Heart right ventricle (tissue), 16 donors: ENCODE measurements at regions of chr4 and their contacts with region 1.

Region 1: DNA sequence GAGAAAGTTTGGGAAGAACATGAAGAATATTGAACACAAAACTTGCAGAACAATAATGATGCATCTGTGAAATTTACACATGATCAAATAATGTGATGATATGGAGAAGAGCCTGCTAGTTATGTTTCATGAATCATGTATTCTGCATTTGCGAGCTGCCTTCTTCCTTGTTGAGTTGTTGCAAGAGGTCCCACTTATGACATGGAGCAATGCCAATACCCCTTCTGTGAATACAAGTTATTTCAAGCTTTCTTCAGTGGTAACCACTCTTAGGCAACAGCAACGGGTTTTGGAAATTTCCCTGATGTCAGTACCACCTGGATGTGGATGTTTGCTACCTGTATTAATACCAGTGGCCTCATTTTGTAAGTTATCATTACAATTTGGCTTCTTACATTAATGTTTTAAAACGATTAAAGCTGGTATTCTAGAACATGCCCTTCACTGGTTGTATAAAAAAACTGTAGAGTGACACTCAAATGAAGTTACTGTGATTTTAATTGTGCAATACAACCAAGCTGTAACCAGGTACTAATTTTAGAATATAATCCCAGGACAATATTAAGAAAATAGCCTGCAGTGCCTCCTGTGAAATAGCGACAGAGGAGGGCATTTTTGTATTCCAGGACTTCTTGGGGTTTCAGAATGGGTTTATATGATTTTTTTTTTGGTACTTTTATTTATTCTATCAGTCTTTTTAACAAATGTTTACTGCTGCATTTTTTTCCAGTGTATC is 25.3 kb downstream of the IQCM start:
- DNase-seq: no peak
- ATAC-seq: peak in 2 of 8 donors; percentile 29 to 39
- H3K4me3 ChIP-seq: no peak overlapping the region
- H3K27ac ChIP-seq: no peak overlapping the region
- H3K4me1 ChIP-seq: peaks cover 0 to 4% (median 0%) of the 10 kb centered on the region in 9 donors
- H3K27me3 ChIP-seq: no peaks in the 10 kb centered on the region
- CTCF ChIP-seq: peak in 1 of 9 donors; percentile 14

Region 2: DNA sequence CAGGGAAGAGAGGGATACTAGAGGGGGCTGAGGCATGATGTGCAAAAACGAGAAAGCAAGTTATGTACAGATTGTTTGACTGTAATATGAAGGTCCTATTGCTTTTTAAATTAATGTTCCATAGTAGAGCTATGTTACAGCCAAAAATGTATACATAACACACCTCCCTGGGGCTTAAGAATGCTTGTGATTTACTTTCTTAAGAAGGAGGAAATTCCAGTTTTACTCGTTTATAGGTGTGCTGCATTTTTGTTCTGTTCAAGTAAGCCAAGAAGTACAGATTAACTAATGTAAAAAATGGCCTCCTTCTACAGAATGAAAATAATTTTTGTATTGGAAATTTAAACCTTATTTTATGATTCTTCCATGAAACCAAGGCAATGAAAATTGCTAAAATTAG is 733.7 kb before region 1 on chr4:
- intact Hi-C with region 1: loop called in 1 of 10 experiments (anchors 5 kb)
- DNase-seq: no peak
- ATAC-seq: no peak
- H3K4me3 ChIP-seq: no peak overlapping the region
- H3K27ac ChIP-seq: no peak overlapping the region
- H3K4me1 ChIP-seq: no peaks in the 10 kb centered on the region
- H3K27me3 ChIP-seq: no peaks in the 10 kb centered on the region
- CTCF ChIP-seq: no peak

Region 3: DNA sequence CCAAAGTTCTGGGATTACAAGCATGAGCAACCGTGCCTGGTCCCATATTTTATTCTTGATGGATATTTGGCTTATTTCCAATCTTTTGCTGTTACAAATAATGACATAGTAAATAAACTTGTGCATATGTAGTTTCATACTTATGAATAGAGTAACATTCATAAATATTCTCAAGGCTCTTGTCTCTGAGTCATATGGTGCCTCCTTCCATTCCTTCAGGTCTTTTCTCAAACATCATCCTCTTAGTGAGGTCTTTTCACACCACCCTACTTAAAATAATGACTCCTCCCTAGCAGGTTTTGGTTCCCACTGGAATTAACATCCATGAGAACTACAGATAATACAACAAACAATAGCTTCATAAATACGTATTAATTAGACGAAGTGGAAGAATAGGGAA is 391.3 kb before region 1 on chr4:
- intact Hi-C with region 1: no loop called
- DNase-seq: no peak
- ATAC-seq: no peak
- H3K4me3 ChIP-seq: no peak overlapping the region
- H3K27ac ChIP-seq: no peak overlapping the region
- H3K4me1 ChIP-seq: peaks cover 0 to 11% (median 0%) of the 10 kb centered on the region in 9 donors
- H3K27me3 ChIP-seq: no peaks in the 10 kb centered on the region
- CTCF ChIP-seq: no peak

Region 4: GRCh38 chr4:149708513-149709175 is 81.7 kb before region 1 on chr4:
- intact Hi-C with region 1: loop called in 1 of 10 experiments (anchors 10 kb)
- DNase-seq: no peak
- ATAC-seq: peak in 1 of 8 donors; percentile 67
- H3K4me3 ChIP-seq: no peak overlapping the region
- H3K27ac ChIP-seq: no peak overlapping the region
- H3K4me1 ChIP-seq: peaks cover 0 to 23% (median 0%) of the 10 kb centered on the region in 9 donors
- H3K27me3 ChIP-seq: no peaks in the 10 kb centered on the region
- CTCF ChIP-seq: no peak

Region 5: GRCh38 chr4:149884046-149884445 is 93.7 kb after region 1 on chr4:
- intact Hi-C with region 1: loop called in 1 of 10 experiments (anchors 10 kb)
- DNase-seq: peak; percentile 21 to 26
- ATAC-seq: peak in 6 of 8 donors; percentile 49 to 87 (median 80)
- H3K4me3 ChIP-seq: no peak overlapping the region
- H3K27ac ChIP-seq: peak overlapping the region in 1 of 10 donors; percentile 18
- H3K4me1 ChIP-seq: peaks cover 0 to 13% (median 0%) of the 10 kb centered on the region in 9 donors
- H3K27me3 ChIP-seq: no peaks in the 10 kb centered on the region
- CTCF ChIP-seq: no peak

Region 6: DNA sequence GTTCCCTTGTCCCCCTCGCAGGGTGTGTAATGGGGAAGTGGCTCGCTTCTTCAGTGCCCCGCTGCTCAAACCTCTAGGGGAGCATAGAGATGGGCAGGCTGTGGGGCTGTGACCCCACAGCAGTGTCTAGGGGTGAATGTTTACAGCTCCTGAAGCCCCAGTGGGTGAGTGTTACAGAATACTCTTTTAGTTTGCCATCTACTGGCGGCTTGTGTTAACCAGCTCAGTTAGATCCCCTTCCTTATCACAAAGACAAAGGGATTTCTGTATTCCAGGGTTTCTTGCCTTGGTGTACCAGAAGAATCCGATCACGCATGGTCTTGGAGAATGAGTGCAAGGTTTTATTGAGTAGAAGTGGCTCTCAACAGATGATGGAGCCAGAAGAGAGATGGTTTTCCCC is 133.4 kb after region 1 on chr4:
- intact Hi-C with region 1: no loop called
- DNase-seq: no peak
- ATAC-seq: no peak
- H3K4me3 ChIP-seq: no peak overlapping the region
- H3K27ac ChIP-seq: no peak overlapping the region
- H3K4me1 ChIP-seq: no peaks in the 10 kb centered on the region
- H3K27me3 ChIP-seq: no peaks in the 10 kb centered on the region
- CTCF ChIP-seq: no peak